ENCODE measurements at regions of chr12 and their contacts with region 1.

Region 1: DNA sequence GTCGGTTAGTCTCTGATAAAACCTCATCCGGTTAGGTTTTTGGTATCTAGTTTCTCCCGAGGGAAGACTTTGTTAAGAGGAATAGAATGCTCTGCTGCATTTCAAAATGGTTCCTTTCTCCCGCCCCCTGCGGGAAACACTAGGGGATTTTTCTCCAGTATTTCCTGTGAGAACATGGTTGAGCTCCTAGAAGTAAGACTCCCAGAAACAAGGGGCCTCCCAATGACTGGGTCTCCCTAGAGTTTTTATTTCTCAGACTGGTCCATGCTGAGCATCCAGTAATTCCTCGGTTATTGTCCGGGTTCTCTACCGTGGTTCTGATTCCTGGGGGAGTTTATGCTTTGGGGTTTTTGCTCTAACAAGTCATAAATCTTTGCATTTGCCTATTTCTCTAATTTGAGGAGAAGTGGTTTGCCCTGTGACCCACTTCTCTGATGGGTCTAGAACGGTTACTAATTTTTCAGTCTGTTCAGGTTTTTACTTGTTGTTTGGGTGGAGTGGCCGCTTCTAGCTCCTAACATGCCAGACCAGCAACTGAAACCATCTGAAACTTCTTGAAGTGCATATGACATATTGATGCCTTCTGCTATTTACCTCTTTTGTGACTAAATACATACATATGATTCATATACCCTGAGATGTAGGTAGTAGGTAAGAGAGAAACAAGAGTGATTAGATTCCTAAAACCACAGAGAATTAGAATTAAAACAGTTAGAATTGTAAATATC is 25.1 kb downstream of the TESPA1 start:
- DNase-seq: no peak
- H3K4me3 ChIP-seq: no peak overlapping the region
- H3K27ac ChIP-seq: no peak overlapping the region
- H3K4me1 ChIP-seq: no peaks in the 10 kb centered on the region
- H3K27me3 ChIP-seq: peaks cover 48% of the 10 kb centered on the region

Region 2: GRCh38 chr12:54749191-54749818 is 210.2 kb before region 1 on chr12:
- in situ Hi-C with region 1: loop called (anchors 10 kb)
- DNase-seq: peak; percentile 62
- H3K4me3 ChIP-seq: no peak overlapping the region
- H3K27ac ChIP-seq: no peak overlapping the region
- H3K4me1 ChIP-seq: no peaks in the 10 kb centered on the region
- H3K27me3 ChIP-seq: no peaks in the 10 kb centered on the region; the same call in 1 of the 2 replicates

Region 3: GRCh38 chr12:55073043-55074022 is 113.9 kb after region 1 on chr12:
- in situ Hi-C with region 1: no loop called
- DNase-seq: peak; percentile 78
- H3K4me3 ChIP-seq: no peak overlapping the region
- H3K27ac ChIP-seq: no peak overlapping the region
- H3K4me1 ChIP-seq: no peaks in the 10 kb centered on the region
- H3K27me3 ChIP-seq: 0 out of 2 replicates have a peak, but pooled peaks cover 11% of the 10 kb centered on the region

Measured in GM23248 (cell line).